Activated CD4-positive, alpha-beta T cell treated with anti-CD3 and anti-CD28 coated beads, Interleukin-2, amount 10 ng/mL, durations not matched to agents 7 days and 5 days (primary cell): ENCODE measurements at regions of chr10 and their contacts with region 1.

Region 1: GRCh38 chr10:97210543-97210961 is 24.8 kb upstream of the SLIT1 start:
- DNase-seq: peak; percentile 76
- H3K4me3 Mint-ChIP-seq: no peak overlapping the region
- H3K27ac Mint-ChIP-seq: no peak overlapping the region
- H3K4me1 Mint-ChIP-seq: no peaks in the 10 kb centered on the region
- H3K27me3 Mint-ChIP-seq: no peaks in the 10 kb centered on the region

Region 2: GRCh38 chr10:97072851-97073665 is 137.5 kb before region 1 on chr10:
- CTCF ChIA-PET with region 1: interaction called, 38 read pairs
- POLR2A ChIA-PET with region 1: no interaction called
- DNase-seq: peak; percentile 83
- H3K4me3 Mint-ChIP-seq: no peak overlapping the region
- H3K27ac Mint-ChIP-seq: no peak overlapping the region
- H3K4me1 Mint-ChIP-seq: peaks cover 13% of the 10 kb centered on the region
- H3K27me3 Mint-ChIP-seq: peaks cover 10% of the 10 kb centered on the region

Region 3: DNA sequence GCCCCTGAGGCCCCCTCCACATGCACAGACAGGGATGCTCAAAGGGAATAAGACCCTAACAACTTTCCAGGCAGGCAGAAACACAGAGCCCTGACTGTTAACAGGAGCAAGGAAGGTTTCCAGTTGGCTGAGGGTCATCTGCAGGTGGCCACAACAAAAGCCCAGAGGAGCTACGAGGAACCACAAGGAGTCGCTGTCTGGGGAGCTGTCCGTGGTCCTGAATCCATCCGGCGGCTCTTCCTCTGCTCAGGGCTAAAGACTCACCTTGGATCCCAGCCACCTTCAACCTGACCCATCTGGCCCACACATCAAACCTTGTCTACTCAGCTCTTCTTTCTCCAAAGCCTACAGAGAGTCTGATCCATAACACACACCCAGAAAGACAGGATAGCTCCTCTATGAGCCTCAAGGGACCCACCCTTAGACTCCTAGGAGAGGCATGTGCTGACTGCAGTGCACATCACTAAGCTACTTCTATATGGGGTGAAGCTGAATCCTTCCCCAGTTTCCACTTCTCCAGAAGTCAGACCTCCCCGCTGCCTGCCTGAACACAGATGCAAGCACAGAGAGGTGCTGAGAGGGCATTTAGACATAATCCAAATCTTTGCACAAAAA is 128.8 kb before region 1 on chr10:
- CTCF ChIA-PET with region 1: interaction called, 10 read pairs
- POLR2A ChIA-PET with region 1: no interaction called
- DNase-seq: peak; percentile 66
- H3K4me3 Mint-ChIP-seq: no peak overlapping the region
- H3K27ac Mint-ChIP-seq: no peak overlapping the region
- H3K4me1 Mint-ChIP-seq: no peaks in the 10 kb centered on the region
- H3K27me3 Mint-ChIP-seq: peaks cover 10% of the 10 kb centered on the region

Region 4: GRCh38 chr10:97222326-97222961 is 11.9 kb after region 1 on chr10:
- CTCF ChIA-PET with region 1: interaction called, 12 read pairs
- POLR2A ChIA-PET with region 1: no interaction called
- DNase-seq: no peak
- H3K4me3 Mint-ChIP-seq: no peak overlapping the region
- H3K27ac Mint-ChIP-seq: no peak overlapping the region
- H3K4me1 Mint-ChIP-seq: peaks cover 35% of the 10 kb centered on the region
- H3K27me3 Mint-ChIP-seq: no peaks in the 10 kb centered on the region

Region 5: DNA sequence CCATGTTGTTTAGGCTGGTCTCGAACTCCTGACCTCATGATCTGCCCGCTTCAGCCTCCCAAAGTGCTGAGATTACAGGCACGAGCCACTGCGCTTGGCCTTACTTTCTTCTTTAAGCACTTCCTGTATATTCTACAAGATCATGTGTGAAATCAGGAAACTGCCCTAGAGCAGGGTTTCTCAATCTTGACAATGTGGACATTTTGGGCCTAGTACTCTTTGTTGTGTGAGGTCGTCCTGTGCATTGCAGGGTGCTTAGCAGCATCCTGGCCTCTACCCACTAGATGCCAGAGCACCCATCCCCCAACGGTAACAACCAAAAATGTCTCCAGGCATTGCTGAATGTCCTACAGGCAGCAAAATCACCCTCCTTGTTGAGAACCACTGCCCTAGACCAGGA is 165.9 kb after region 1 on chr10:
- CTCF ChIA-PET with region 1: no interaction called
- POLR2A ChIA-PET with region 1: no interaction called
- DNase-seq: no peak
- H3K4me3 Mint-ChIP-seq: no peak overlapping the region
- H3K27ac Mint-ChIP-seq: no peak overlapping the region
- H3K4me1 Mint-ChIP-seq: peaks cover 3% of the 10 kb centered on the region
- H3K27me3 Mint-ChIP-seq: no peaks in the 10 kb centered on the region